ENCODE measurements at regions of chr14 and their contacts with region 1.

Region 1: GRCh38 chr14:23567192-23568020 is at the start of gene AP1G2:
- DNase-seq: peak; percentile 84
- H3K4me3 ChIP-seq: peak within 1 kb of the TSS; percentile 60 to 77 (median 64)
- H3K27ac ChIP-seq: peak within 1 kb of the TSS; percentile 44
- H3K4me1 ChIP-seq: peaks cover 23% of the 10 kb centered on the region
- H3K27me3 ChIP-seq: no peaks in the 10 kb centered on the region
- CTCF ChIP-seq: no peak
- total RNA-seq, gene AP1G2: 54.7 to 132 TPM

Region 2: DNA sequence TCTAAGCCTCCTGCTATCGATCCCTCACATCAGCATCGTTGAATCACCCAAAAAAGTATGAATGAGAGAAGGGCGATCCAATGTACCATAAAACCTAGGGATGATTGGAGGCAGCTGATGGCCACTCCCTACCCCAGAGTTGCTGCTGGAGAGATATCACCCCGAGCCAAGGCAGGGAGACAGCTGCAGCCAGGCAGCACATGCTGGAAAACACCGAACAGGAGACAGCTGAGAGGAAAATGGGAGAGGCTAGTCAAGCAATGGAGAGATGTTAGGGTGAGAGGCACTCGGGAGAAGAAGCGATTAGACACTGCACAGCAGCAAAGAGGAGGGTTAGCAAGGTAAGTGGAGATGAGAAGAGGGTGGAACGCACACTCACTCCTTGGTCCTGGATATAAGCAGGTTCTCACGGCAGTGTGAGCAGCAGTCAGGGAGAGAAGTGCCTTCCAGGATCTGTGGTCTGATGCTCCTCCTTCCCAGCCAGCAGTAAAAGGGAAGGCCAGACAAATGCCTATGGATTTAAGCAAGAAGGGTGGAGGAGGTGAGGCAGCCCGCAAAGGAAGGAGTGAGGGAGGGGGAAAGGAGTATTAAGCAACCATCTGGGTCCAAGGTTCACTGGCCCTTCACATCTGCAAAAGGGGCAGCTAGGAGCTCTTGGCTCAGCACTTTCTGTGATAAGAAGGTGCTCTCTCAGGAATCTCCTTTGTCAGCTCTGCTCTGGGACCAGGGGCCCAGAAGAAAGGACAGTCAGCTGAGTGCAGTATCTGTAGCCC is 752.3 kb before region 1 on chr14 and contains the start of gene SLC7A7:
- CTCF ChIA-PET with region 1: no interaction called
- dilution Hi-C with region 1: no loop called
- in situ Hi-C with region 1: no loop called
- intact Hi-C with region 1: no loop called
- DNase-seq: no peak
- H3K4me3 ChIP-seq: no peak within 1 kb of the TSS
- H3K27ac ChIP-seq: no peak within 1 kb of the TSS
- H3K4me1 ChIP-seq: peaks cover 12% of the 10 kb centered on the region
- H3K27me3 ChIP-seq: no peaks in the 10 kb centered on the region
- CTCF ChIP-seq: no peak
- total RNA-seq, gene SLC7A7: 0.78 to 1.0 TPM

Region 3: GRCh38 chr14:23379366-23380196 is 187.8 kb before region 1 on chr14:
- CTCF ChIA-PET with region 1: no interaction called
- dilution Hi-C with region 1: no loop called
- in situ Hi-C with region 1: no loop called
- intact Hi-C with region 1: loop called (anchors 2 kb)
- DNase-seq: peak; percentile 55
- H3K4me3 ChIP-seq: no peak overlapping the region
- H3K27ac ChIP-seq: no peak overlapping the region
- H3K4me1 ChIP-seq: no peaks in the 10 kb centered on the region
- H3K27me3 ChIP-seq: no peaks in the 10 kb centered on the region
- CTCF ChIP-seq: peak; percentile 91 to 99

Region 4: DNA sequence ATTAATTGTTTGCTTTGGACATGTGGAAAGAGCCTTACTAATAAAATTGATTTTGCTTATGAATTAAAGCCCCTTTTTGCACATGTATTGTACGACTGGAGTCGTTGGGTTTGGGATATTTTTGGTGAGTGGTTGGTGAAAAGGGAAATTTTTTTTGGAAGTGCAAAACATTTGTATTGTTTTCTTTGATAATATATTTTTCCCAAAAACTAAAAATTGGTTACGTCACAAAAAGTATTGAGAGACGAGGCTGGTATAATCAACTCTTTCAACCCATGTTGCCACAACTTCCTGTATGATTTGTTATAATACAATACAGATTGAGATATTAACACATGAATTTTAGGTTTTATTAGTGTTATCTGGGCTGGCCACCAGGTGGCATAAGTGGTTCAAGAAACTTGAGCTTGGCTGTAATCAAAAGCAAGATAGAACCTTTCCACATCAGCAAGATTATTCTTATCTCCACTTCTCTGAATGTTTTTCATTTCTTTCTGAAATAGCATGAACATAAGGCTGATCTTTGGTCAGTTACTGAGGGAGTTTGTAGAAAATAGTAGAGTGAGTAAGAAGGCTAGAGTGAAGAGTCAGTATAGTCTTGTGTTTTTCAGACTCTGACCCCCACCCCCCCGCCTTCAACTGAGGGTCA is 89.2 kb before region 1 on chr14:
- CTCF ChIA-PET with region 1: interaction called, 8 read pairs
- dilution Hi-C with region 1: no loop called
- in situ Hi-C with region 1: loop called in 1 of 2 experiments (anchors 5 kb)
- intact Hi-C with region 1: loop called (anchors 1 kb)
- DNase-seq: peak; percentile 41
- H3K4me3 ChIP-seq: no peak overlapping the region
- H3K27ac ChIP-seq: no peak overlapping the region
- H3K4me1 ChIP-seq: no peaks in the 10 kb centered on the region
- H3K27me3 ChIP-seq: no peaks in the 10 kb centered on the region
- CTCF ChIP-seq: peak; percentile 68 to 69

Region 5: GRCh38 chr14:23530375-23531055 is 36.9 kb before region 1 on chr14:
- CTCF ChIA-PET with region 1: no interaction called
- dilution Hi-C with region 1: loop called (anchors 5 kb)
- in situ Hi-C with region 1: no loop called
- intact Hi-C with region 1: no loop called
- DNase-seq: no peak
- H3K4me3 ChIP-seq: no peak overlapping the region
- H3K27ac ChIP-seq: no peak overlapping the region
- H3K4me1 ChIP-seq: no peaks in the 10 kb centered on the region
- H3K27me3 ChIP-seq: no peaks in the 10 kb centered on the region
- CTCF ChIP-seq: no peak

Measured in mammary epithelial cell (primary cell).